ENCODE measurements at regions of chr6 and their contacts with region 1.

Region 1: DNA sequence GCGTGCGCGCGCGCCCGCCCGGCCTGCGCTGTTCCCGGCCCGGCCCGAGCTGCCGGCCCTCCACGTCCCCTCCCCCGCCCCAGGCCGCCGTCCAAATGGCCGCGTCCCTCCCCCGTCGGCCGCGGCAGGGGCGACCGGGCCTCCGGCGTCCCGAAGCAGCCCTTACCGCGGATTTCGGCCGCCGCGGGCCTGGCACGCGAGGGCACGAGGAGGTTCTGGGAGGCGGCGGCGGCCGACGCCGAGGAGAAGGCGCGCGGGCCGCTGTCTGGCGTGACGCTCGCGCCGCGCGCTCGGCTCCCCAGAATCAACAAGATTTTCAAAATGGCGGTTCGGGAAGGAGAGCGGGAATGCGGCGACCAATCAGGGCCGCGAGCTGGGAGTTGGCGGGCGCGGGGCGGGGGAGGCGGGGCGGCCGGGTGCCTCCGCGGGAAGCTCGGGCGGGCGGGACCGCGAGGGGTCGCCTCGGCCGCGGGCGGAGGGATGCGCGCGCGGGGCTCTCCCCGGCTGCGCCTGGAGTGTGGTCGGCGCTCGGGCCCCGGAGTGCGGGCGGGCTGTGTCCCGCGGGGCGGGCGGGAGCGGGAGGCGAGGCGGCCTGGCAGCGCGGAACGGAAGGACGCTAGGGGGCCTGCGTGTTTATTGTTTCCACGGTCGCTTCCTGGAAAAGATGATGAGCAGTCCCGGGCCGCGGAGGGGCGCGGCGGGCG is at the start of gene DEK:
- DNase-seq: peak; percentile 64 to 85 (median 78)
- ATAC-seq: peak; percentile 84
- H3K4me3 ChIP-seq: peak within 1 kb of the TSS; percentile 71
- H3K4me3 Mint-ChIP-seq: peak within 1 kb of the TSS; percentile 90 to 99 (median 94)
- H3K27ac ChIP-seq: peak within 1 kb of the TSS; percentile 83
- H3K27ac Mint-ChIP-seq: peak within 1 kb of the TSS; percentile 91 to 98 (median 96)
- H3K4me1 ChIP-seq: peaks cover 26 to 33% of the 10 kb centered on the region in 2 donors
- H3K4me1 Mint-ChIP-seq: peaks cover 39 to 55% (median 51%) of the 10 kb centered on the region in 7 donors
- H3K27me3 ChIP-seq: no peaks in the 10 kb centered on the region
- H3K27me3 Mint-ChIP-seq: no peaks in the 10 kb centered on the region
- total RNA-seq, gene DEK: 49.6 to 174 (median 101) TPM

Region 2: GRCh38 chr6:17599885-17600526 is 664.4 kb before region 1 on chr6 and contains the start of gene FAM8A1:
- CTCF ChIA-PET with region 1: no interaction called
- POLR2A ChIA-PET with region 1: no interaction called
- intact Hi-C with region 1: loop called in 1 of 2 experiments (anchors 1 kb)
- DNase-seq: peak; percentile 91 to 97 (median 94)
- ATAC-seq: peak; percentile 97
- H3K4me3 ChIP-seq: peak within 1 kb of the TSS; percentile 49
- H3K4me3 Mint-ChIP-seq: peak within 1 kb of the TSS; percentile 85 to 97 (median 94)
- H3K27ac ChIP-seq: peak within 1 kb of the TSS; percentile 94
- H3K27ac Mint-ChIP-seq: peak within 1 kb of the TSS; percentile 84 to 96 (median 93)
- H3K4me1 ChIP-seq: peaks cover 19 to 29% of the 10 kb centered on the region in 2 donors
- H3K4me1 Mint-ChIP-seq: peaks cover 29 to 48% (median 45%) of the 10 kb centered on the region in 7 donors
- H3K27me3 ChIP-seq: no peaks in the 10 kb centered on the region
- H3K27me3 Mint-ChIP-seq: no peaks in the 10 kb centered on the region
- total RNA-seq, gene FAM8A1: 8.0 to 26.1 (median 21.1) TPM

Region 3: GRCh38 chr6:18155150-18155863 is 109.1 kb before region 1 on chr6 and contains the start of gene KDM1B:
- CTCF ChIA-PET with region 1: no interaction called
- POLR2A ChIA-PET with region 1: interaction called, 3 read pairs
- intact Hi-C with region 1: loop called (anchors 1 kb)
- DNase-seq: peak; percentile 95 to 100 (median 99)
- ATAC-seq: peak; percentile 95
- H3K4me3 ChIP-seq: peak within 1 kb of the TSS; percentile 95
- H3K4me3 Mint-ChIP-seq: peak within 1 kb of the TSS; percentile 91 to 99 (median 99)
- H3K27ac ChIP-seq: peak within 1 kb of the TSS; percentile 93
- H3K27ac Mint-ChIP-seq: peak within 1 kb of the TSS; percentile 91 to 99 (median 97)
- H3K4me1 ChIP-seq: peaks cover 8 to 17% of the 10 kb centered on the region in 2 donors
- H3K4me1 Mint-ChIP-seq: peaks cover 24 to 36% (median 28%) of the 10 kb centered on the region in 7 donors
- H3K27me3 ChIP-seq: no peaks in the 10 kb centered on the region
- H3K27me3 Mint-ChIP-seq: peaks cover 0 to 7% (median 0%) of the 10 kb centered on the region in 5 donors
- total RNA-seq, gene KDM1B: 7.3 to 25.4 (median 12.5) TPM

Region 4: GRCh38 chr6:18245642-18246041 is 18.7 kb before region 1 on chr6:
- CTCF ChIA-PET with region 1: no interaction called
- POLR2A ChIA-PET with region 1: interaction called, 3 read pairs
- intact Hi-C with region 1: loop called (anchors 2 kb)
- DNase-seq: no peak
- ATAC-seq: peak; percentile 36
- H3K4me3 ChIP-seq: no peak overlapping the region
- H3K4me3 Mint-ChIP-seq: no peak overlapping the region
- H3K27ac ChIP-seq: no peak overlapping the region
- H3K27ac Mint-ChIP-seq: peak overlapping the region in 6 of 9 donors; percentile 25 to 68 (median 38)
- H3K4me1 ChIP-seq: peaks cover 0 to 3% of the 10 kb centered on the region in 2 donors
- H3K4me1 Mint-ChIP-seq: peaks cover 2 to 72% (median 37%) of the 10 kb centered on the region in 7 donors
- H3K27me3 ChIP-seq: no peaks in the 10 kb centered on the region
- H3K27me3 Mint-ChIP-seq: no peaks in the 10 kb centered on the region

Region 5: GRCh38 chr6:18277237-18278006 is 13.1 kb after region 1 on chr6:
- CTCF ChIA-PET with region 1: no interaction called
- POLR2A ChIA-PET with region 1: no interaction called
- intact Hi-C with region 1: no loop called
- DNase-seq: no peak
- ATAC-seq: no peak
- H3K4me3 ChIP-seq: no peak overlapping the region
- H3K4me3 Mint-ChIP-seq: peak overlapping the region in 4 of 10 donors; percentile 29 to 69 (median 48)
- H3K27ac ChIP-seq: no peak overlapping the region
- H3K27ac Mint-ChIP-seq: no peak overlapping the region
- H3K4me1 ChIP-seq: no peaks in the 10 kb centered on the region
- H3K4me1 Mint-ChIP-seq: peaks cover 0 to 13% (median 9%) of the 10 kb centered on the region in 7 donors
- H3K27me3 ChIP-seq: peaks cover 0 to 7% of the 10 kb centered on the region in 2 donors
- H3K27me3 Mint-ChIP-seq: peaks cover 53 to 78% (median 62%) of the 10 kb centered on the region in 5 donors

Region 6: GRCh38 chr6:18323935-18324705 is 59.7 kb after region 1 on chr6:
- CTCF ChIA-PET with region 1: no interaction called
- POLR2A ChIA-PET with region 1: no interaction called
- intact Hi-C with region 1: loop called in 1 of 2 experiments (anchors 1 kb)
- DNase-seq: peak in 7 of 9 donors; percentile 18 to 56 (median 49)
- ATAC-seq: peak; percentile 79
- H3K4me3 ChIP-seq: no peak overlapping the region
- H3K4me3 Mint-ChIP-seq: no peak overlapping the region
- H3K27ac ChIP-seq: no peak overlapping the region
- H3K27ac Mint-ChIP-seq: no peak overlapping the region
- H3K4me1 ChIP-seq: no peaks in the 10 kb centered on the region
- H3K4me1 Mint-ChIP-seq: peaks cover 0 to 8% (median 0%) of the 10 kb centered on the region in 7 donors
- H3K27me3 ChIP-seq: no peaks in the 10 kb centered on the region
- H3K27me3 Mint-ChIP-seq: peaks cover 0 to 11% (median 0%) of the 10 kb centered on the region in 5 donors

Region 7: DNA sequence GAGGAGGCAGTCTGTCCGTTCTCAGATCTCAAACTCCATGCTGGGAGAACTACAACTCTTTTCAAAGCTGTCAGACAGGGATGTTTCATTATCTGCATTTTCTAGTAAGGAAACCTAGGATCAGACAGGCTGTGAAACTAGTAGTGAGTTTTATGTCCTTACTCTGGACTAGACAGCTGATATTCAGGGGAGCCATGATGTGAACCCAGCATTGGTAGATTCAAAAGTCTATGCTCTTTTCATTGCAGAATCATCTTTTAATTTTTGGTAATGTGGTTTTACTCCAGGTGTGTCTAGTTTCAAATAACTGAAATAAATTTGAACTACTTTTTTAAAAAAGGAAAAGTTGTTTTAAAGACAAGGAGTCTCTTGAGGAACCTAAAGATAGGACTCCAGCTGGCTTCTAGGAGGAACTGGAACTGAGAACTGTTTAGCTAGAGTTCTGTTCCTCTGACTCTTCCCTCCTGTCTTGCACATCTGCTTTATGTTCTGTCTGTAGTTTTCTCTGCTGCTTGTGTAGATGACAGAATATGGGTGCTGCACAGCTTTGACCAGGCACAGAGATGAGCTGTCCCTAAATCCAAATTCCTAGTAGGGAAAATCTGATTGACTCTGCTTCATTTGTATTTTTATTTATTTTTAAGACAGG is 95.0 kb after region 1 on chr6:
- CTCF ChIA-PET with region 1: no interaction called
- POLR2A ChIA-PET with region 1: no interaction called
- intact Hi-C with region 1: no loop called
- DNase-seq: no peak
- ATAC-seq: peak; percentile 49
- H3K4me3 ChIP-seq: no peak overlapping the region
- H3K4me3 Mint-ChIP-seq: no peak overlapping the region
- H3K27ac ChIP-seq: no peak overlapping the region
- H3K27ac Mint-ChIP-seq: no peak overlapping the region
- H3K4me1 ChIP-seq: no peaks in the 10 kb centered on the region
- H3K4me1 Mint-ChIP-seq: peaks cover 0 to 2% (median 0%) of the 10 kb centered on the region in 7 donors
- H3K27me3 ChIP-seq: no peaks in the 10 kb centered on the region
- H3K27me3 Mint-ChIP-seq: peaks cover 8 to 28% (median 15%) of the 10 kb centered on the region in 5 donors

Region 8: DNA sequence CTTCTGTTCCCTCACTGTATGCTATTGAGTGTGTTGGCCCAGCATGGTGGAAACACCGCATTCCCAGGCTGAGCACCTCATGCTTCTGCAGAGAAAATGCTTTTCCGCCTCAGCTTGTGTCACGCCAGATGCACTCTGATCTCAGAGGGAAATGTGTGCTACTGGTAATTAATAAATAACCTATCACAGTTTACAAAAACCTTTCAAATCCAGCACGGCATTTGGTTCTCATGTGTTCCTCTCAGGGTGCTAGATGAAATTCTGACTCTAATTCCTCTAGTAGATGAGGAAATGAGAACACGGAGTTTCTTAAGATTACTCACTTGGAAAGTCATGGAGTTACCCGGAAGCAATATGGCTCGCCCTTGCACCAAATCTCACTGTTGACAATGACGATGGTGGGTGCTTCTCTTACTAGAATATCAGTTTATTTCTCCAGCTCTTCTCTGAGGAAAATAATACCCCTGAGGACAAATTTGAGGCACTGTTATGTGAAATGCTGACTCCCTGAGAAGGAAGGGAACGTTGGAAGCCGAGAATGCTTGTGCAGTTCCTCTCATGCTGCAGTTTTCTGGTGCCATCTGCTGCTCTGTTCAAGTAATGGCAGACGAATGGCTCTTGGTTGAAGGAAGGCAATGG is 239.3 kb after region 1 on chr6:
- CTCF ChIA-PET with region 1: no interaction called
- POLR2A ChIA-PET with region 1: no interaction called
- intact Hi-C with region 1: loop called (anchors 1 to 5 kb)
- DNase-seq: peak in 6 of 9 donors; percentile 19 to 54 (median 38)
- ATAC-seq: peak; percentile 63
- H3K4me3 ChIP-seq: no peak overlapping the region
- H3K4me3 Mint-ChIP-seq: peak overlapping the region in 2 of 10 donors; percentile 29 to 50
- H3K27ac ChIP-seq: no peak overlapping the region
- H3K27ac Mint-ChIP-seq: no peak overlapping the region
- H3K4me1 ChIP-seq: no peaks in the 10 kb centered on the region
- H3K4me1 Mint-ChIP-seq: peaks cover 0 to 4% (median 0%) of the 10 kb centered on the region in 7 donors
- H3K27me3 ChIP-seq: no peaks in the 10 kb centered on the region
- H3K27me3 Mint-ChIP-seq: peaks cover 0 to 7% (median 4%) of the 10 kb centered on the region in 5 donors

Measured in naive thymus-derived CD4-positive, alpha-beta T cell (primary cell).